Endothelial cell of umbilical vein (primary cell): ENCODE measurements at regions of chr2 and their contacts with region 1.

Region 1: GRCh38 chr2:133780099-133780839 is 212.0 kb upstream of the NCKAP5 start:
- DNase-seq: peak; percentile 90
- H3K4me3 ChIP-seq: no peak overlapping the region
- H3K27ac ChIP-seq: no peak overlapping the region
- H3K4me1 ChIP-seq: peaks cover 3% of the 10 kb centered on the region
- H3K27me3 ChIP-seq: no peaks in the 10 kb centered on the region
- CTCF ChIP-seq: peak; percentile 73
- POLR2A ChIP-seq: no peak

Region 2: GRCh38 chr2:132651115-132652045 is 1128.9 kb before region 1 on chr2:
- CTCF ChIA-PET with region 1: interaction called, 17 read pairs
- POLR2A ChIA-PET with region 1: no interaction called
- dilution Hi-C with region 1: no loop called
- intact Hi-C with region 1: loop called (anchors 1 kb)
- DNase-seq: peak; percentile 73
- H3K4me3 ChIP-seq: no peak overlapping the region
- H3K27ac ChIP-seq: no peak overlapping the region
- H3K4me1 ChIP-seq: peaks cover 2% of the 10 kb centered on the region
- H3K27me3 ChIP-seq: no peaks in the 10 kb centered on the region
- CTCF ChIP-seq: peak; percentile 56 to 80
- POLR2A ChIP-seq: no peak

Region 3: DNA sequence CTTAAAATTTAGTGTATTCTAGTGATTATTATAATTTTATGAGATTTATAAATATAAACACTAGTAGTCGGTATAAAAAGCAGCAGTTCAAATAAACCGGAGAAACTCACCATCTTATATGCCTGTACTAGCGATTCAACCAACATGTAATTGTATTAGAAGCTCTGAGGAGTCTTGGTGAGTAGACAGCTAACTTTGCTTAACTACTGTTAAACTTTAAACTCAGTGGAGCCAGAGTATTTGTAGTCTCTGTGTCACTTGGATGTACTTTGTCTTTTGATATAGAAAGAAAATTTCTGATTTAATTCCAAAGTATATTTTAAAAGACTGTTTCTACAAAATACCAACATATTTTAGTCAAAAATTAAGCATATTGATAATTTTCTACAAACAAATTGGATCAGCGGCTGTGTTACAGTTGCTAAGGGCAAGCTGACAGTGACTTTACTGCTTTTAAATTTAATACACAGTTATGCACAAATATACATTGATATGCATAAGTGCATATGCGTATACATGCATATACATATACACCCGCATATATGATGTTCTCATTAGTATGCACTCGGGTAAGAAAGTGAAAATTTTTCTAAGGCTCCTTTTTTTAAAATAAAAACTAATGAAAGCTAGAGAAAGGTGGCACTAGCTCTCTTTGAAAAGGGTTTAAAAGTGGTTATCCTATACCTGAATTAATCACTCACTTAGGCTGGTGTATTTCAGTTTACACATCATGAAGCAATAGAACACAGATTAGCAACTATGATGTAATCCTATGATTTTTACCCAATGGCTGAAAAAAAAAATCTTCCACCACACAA is 586.5 kb before region 1 on chr2:
- CTCF ChIA-PET with region 1: interaction called, 14 read pairs
- POLR2A ChIA-PET with region 1: no interaction called
- dilution Hi-C with region 1: no loop called
- intact Hi-C with region 1: no loop called
- DNase-seq: peak; percentile 38
- H3K4me3 ChIP-seq: no peak overlapping the region
- H3K27ac ChIP-seq: no peak overlapping the region
- H3K4me1 ChIP-seq: peaks cover 3% of the 10 kb centered on the region
- H3K27me3 ChIP-seq: no peaks in the 10 kb centered on the region
- CTCF ChIP-seq: no peak
- POLR2A ChIP-seq: no peak

Region 4: GRCh38 chr2:133561045-133561852 is 219.0 kb before region 1 on chr2:
- CTCF ChIA-PET with region 1: interaction called, 40 read pairs
- POLR2A ChIA-PET with region 1: no interaction called
- dilution Hi-C with region 1: no loop called
- intact Hi-C with region 1: loop called (anchors 1 kb)
- DNase-seq: peak; percentile 74
- H3K4me3 ChIP-seq: no peak overlapping the region
- H3K27ac ChIP-seq: no peak overlapping the region
- H3K4me1 ChIP-seq: no peaks in the 10 kb centered on the region
- H3K27me3 ChIP-seq: no peaks in the 10 kb centered on the region
- CTCF ChIP-seq: peak; percentile 38 to 52
- POLR2A ChIP-seq: no peak

Region 5: DNA sequence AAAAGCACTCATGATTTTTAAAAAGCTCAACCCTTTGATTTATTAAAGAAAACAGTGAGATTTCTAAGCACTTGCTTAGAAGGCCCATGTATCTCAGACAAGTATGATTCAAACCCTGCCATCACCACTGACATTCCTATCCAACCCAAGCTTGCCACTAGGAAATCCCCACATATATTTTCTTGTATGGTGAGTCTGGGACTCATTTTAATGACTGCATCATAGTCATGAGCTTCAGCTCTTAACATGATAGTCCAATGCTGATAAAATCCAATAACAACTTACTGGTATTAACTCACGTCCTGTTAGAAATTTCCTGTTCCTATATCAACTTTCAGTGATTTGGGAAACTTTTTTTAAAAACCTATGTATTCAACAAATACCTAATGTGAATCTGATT is 172.6 kb before region 1 on chr2:
- CTCF ChIA-PET with region 1: interaction called, 10 read pairs
- POLR2A ChIA-PET with region 1: no interaction called
- dilution Hi-C with region 1: no loop called
- intact Hi-C with region 1: no loop called
- DNase-seq: peak; percentile 75
- H3K4me3 ChIP-seq: no peak overlapping the region
- H3K27ac ChIP-seq: no peak overlapping the region
- H3K4me1 ChIP-seq: peaks cover 10% of the 10 kb centered on the region
- H3K27me3 ChIP-seq: no peaks in the 10 kb centered on the region
- CTCF ChIP-seq: no peak
- POLR2A ChIP-seq: no peak

Region 6: DNA sequence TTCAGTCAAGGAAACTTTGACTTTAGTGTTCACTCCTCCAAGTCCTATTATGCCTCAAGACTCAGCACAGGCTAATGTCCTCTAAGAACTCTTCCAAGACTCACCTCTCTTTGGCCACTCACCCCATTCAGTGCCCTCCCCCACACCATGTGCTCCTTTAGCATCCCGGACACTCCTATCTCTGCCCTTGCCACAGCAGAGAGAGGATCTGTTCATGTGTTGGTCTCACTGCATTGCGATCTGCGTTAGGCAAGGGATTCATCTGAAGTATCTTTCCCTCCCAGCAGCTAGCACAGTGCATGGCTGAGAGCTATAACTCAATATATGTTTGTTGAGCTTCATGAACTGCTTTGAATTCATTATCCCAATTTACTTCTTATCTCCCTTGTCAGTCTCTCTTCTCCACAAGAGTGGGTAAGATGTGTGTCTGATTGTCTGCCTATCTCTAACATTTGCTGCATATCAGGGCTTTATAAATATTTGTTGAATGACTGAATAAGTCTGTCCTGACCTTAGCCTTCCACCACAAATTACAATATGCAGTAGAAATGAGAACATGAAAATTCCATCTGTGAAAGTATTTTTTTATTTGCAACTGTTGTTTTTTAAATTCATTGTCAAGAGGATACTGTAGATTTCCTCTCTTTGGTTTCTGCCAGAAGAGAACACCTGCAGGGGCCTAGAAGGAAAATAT is 32.1 kb before region 1 on chr2:
- CTCF ChIA-PET with region 1: no interaction called
- POLR2A ChIA-PET with region 1: no interaction called
- dilution Hi-C with region 1: no loop called
- intact Hi-C with region 1: no loop called
- DNase-seq: no peak
- H3K4me3 ChIP-seq: no peak overlapping the region
- H3K27ac ChIP-seq: no peak overlapping the region
- H3K4me1 ChIP-seq: no peaks in the 10 kb centered on the region
- H3K27me3 ChIP-seq: no peaks in the 10 kb centered on the region
- CTCF ChIP-seq: no peak
- POLR2A ChIP-seq: no peak

Region 7: GRCh38 chr2:133817680-133818579 is 37.7 kb after region 1 on chr2:
- CTCF ChIA-PET with region 1: interaction called, 9 read pairs
- POLR2A ChIA-PET with region 1: no interaction called
- dilution Hi-C with region 1: no loop called
- intact Hi-C with region 1: loop called (anchors 2 kb)
- DNase-seq: peak; percentile 98
- H3K4me3 ChIP-seq: no peak overlapping the region
- H3K27ac ChIP-seq: peak overlapping the region; percentile 98
- H3K4me1 ChIP-seq: peaks cover 88% of the 10 kb centered on the region
- H3K27me3 ChIP-seq: no peaks in the 10 kb centered on the region
- CTCF ChIP-seq: no peak
- POLR2A ChIP-seq: peak; percentile 57